CD4-positive, alpha-beta T cell (primary cell): ENCODE measurements at regions of chr22 and their contacts with region 1.

Region 1: GRCh38 chr22:50030297-50031188 is 18.0 kb upstream of the IL17REL start:
- DNase-seq: peak; percentile 69 to 93 (median 78)
- ATAC-seq: peak; percentile 95
- H3K4me3 ChIP-seq: no peak overlapping the region
- H3K4me3 Mint-ChIP-seq: no peak overlapping the region
- H3K27ac ChIP-seq: no peak overlapping the region
- H3K27ac Mint-ChIP-seq: no peak overlapping the region
- H3K4me1 ChIP-seq: peaks cover 23% of the 10 kb centered on the region
- H3K4me1 Mint-ChIP-seq: peaks cover 7% of the 10 kb centered on the region
- H3K27me3 ChIP-seq: peaks cover 9 to 22% of the 10 kb centered on the region in 2 experiments
- H3K27me3 Mint-ChIP-seq: peaks cover 14% of the 10 kb centered on the region
- CTCF ChIP-seq: peak; percentile 86

Region 2: DNA sequence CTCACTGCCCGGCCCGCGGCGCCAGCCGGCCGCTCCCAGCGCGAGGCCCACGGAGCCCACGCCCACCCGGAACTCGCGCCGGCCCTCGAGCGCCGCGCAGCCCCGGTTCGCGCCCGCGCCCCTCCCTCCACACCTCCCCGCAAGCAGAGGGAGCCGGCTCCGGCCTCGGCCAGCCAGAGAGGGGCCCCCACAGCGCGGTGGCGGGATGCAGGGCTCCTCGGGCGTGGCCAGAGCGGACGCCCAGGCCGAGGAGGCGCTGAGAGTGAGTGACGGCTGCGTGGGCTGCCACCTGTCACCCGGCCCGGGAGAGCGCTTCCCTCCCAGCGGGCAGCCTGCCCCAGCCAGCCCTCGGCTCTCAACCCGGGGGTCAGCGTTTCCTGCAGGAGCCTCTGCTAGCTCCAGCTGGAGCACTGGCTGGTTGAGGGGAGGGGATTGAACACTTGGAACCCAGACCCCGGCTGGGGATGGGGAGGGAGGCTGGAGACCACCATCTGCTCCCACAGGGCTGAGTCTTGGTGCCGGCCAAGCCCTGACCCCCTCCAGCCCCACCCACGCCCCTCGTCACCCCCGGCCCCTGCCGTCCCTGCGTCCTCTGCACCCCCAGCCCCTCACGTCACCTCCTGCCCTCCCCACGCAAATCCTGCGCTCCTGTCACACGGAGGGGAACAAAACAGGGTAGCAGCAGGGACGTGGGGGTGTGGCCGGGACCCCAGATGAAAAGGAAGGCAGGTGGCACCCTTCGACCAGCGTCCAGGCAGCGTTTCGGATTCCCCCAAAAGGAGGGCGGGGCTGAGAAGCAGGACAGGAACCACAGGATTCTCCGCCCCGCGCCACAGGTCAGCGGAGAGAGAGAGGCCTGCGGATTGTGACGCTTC is 359.9 kb before region 1 on chr22:
- CTCF ChIA-PET with region 1: no interaction called
- POLR2A ChIA-PET with region 1: no interaction called
- intact Hi-C with region 1: no loop called
- DNase-seq: peak in 5 of 14 experiments; percentile 9 to 49 (median 35)
- ATAC-seq: peak; percentile 43
- H3K4me3 ChIP-seq: peak overlapping the region; percentile 44
- H3K4me3 Mint-ChIP-seq: peak overlapping the region; percentile 84
- H3K27ac ChIP-seq: no peak overlapping the region
- H3K27ac Mint-ChIP-seq: no peak overlapping the region
- H3K4me1 ChIP-seq: peaks cover 37% of the 10 kb centered on the region
- H3K4me1 Mint-ChIP-seq: peaks cover 33% of the 10 kb centered on the region
- H3K27me3 ChIP-seq: peaks cover 17 to 28% of the 10 kb centered on the region in 2 experiments
- H3K27me3 Mint-ChIP-seq: peaks cover 33% of the 10 kb centered on the region
- CTCF ChIP-seq: no peak

Region 3: GRCh38 chr22:49767355-49768062 is 263.0 kb before region 1 on chr22:
- CTCF ChIA-PET with region 1: interaction called, 6 read pairs
- POLR2A ChIA-PET with region 1: interaction called, 7 read pairs
- intact Hi-C with region 1: loop called (anchors 1 kb)
- DNase-seq: peak in 6 of 14 experiments; percentile 14 to 75 (median 54)
- ATAC-seq: peak; percentile 59
- H3K4me3 ChIP-seq: no peak overlapping the region
- H3K4me3 Mint-ChIP-seq: no peak overlapping the region
- H3K27ac ChIP-seq: no peak overlapping the region
- H3K27ac Mint-ChIP-seq: no peak overlapping the region
- H3K4me1 ChIP-seq: peaks cover 13% of the 10 kb centered on the region
- H3K4me1 Mint-ChIP-seq: no peaks in the 10 kb centered on the region
- H3K27me3 ChIP-seq: no peaks in the 10 kb centered on the region
- H3K27me3 Mint-ChIP-seq: no peaks in the 10 kb centered on the region
- CTCF ChIP-seq: peak; percentile 82

Region 4: DNA sequence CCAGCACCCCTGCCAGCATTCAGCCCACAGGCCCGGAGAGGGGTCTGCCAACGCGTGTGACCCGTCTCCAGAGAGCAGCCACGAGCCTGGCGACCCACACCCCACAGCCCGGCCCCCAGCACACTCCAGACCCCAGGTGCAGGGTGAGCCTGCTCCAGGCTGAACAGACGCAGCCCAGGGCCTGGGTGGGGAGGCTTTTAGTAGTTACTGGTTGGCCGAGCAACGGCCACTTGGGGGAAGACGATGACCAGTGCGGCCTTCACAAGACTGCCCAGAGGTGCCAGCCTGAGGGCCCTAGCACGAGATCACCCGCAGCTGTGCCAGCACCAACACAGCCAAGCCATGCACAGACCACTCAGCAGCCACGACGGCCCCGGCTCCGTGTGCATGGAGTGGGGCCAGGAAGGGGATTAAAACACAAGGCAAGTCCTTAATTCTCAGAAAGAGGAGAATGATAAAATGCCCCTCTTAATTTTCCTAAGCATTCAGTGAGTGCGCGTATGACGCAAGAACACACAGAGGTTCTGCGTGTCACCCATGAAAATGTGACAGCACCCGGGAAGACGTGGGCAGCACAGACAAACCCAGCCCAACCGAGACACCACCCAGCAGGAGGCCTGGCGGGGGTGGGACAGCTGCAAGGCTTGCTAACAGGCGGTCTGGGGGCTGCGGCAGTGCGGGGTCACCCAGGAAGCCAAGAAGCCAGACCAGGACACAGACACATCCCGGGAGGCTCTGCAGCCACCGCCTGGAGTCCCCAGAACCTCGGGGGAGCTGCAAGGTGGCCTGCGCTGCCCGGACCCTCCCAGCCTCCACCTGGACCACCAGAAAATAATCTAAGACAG is 250.5 kb before region 1 on chr22:
- CTCF ChIA-PET with region 1: no interaction called
- POLR2A ChIA-PET with region 1: no interaction called
- intact Hi-C with region 1: no loop called
- DNase-seq: no peak
- ATAC-seq: no peak
- H3K4me3 ChIP-seq: no peak overlapping the region
- H3K4me3 Mint-ChIP-seq: no peak overlapping the region
- H3K27ac ChIP-seq: no peak overlapping the region
- H3K27ac Mint-ChIP-seq: no peak overlapping the region
- H3K4me1 ChIP-seq: peaks cover 32% of the 10 kb centered on the region
- H3K4me1 Mint-ChIP-seq: peaks cover 5% of the 10 kb centered on the region
- H3K27me3 ChIP-seq: no peaks in the 10 kb centered on the region
- H3K27me3 Mint-ChIP-seq: no peaks in the 10 kb centered on the region
- CTCF ChIP-seq: no peak

Region 5: GRCh38 chr22:49930739-49931412 is 99.7 kb before region 1 on chr22:
- CTCF ChIA-PET with region 1: interaction called, 36 read pairs
- POLR2A ChIA-PET with region 1: interaction called, 14 read pairs
- intact Hi-C with region 1: loop called (anchors 1 kb)
- DNase-seq: peak in 12 of 14 experiments; percentile 22 to 83 (median 48)
- ATAC-seq: peak; percentile 37
- H3K4me3 ChIP-seq: no peak overlapping the region
- H3K4me3 Mint-ChIP-seq: peak overlapping the region; percentile 73
- H3K27ac ChIP-seq: peak overlapping the region in 1 of 2 donors; percentile 39
- H3K27ac Mint-ChIP-seq: peak overlapping the region; percentile 89
- H3K4me1 ChIP-seq: peaks cover 60% of the 10 kb centered on the region
- H3K4me1 Mint-ChIP-seq: peaks cover 42% of the 10 kb centered on the region
- H3K27me3 ChIP-seq: no peaks in the 10 kb centered on the region
- H3K27me3 Mint-ChIP-seq: no peaks in the 10 kb centered on the region
- CTCF ChIP-seq: peak; percentile 59

Region 6: DNA sequence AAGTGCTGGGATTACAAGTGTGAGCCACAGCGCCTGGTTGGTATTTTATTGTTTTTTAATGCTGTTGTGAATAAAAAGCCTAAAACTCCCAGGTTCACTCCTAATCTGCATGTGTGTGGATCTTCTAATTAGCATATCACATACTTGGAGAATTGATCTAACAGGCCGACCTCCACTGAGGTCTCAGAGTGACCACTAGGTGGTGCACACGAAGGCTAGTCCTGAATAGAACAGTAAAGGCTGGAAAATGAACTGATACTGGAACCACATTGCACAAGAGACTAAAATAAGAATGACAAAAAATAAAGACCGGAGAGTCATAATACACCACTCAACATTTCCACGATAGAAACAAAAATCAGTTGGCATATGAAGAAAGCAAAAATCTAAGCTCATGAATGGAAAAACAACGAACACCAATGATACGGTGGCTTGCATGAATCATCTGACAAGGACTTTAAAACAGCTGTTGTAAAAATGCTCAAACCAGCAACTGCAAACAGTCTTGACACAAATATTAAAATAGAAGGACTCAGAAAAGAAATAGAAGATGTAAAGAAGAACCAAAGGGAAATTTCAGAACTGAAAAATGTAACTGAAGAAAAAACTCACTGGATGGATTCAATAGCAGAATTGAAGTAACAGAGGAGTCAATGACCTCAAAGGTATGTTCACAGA is 50.8 kb before region 1 on chr22:
- CTCF ChIA-PET with region 1: interaction called, 4 read pairs
- POLR2A ChIA-PET with region 1: no interaction called
- intact Hi-C with region 1: loop called in 1 of 2 experiments (anchors 10 kb)
- DNase-seq: peak in 4 of 14 experiments; percentile 33 to 68 (median 54)
- ATAC-seq: no peak
- H3K4me3 ChIP-seq: no peak overlapping the region
- H3K4me3 Mint-ChIP-seq: no peak overlapping the region
- H3K27ac ChIP-seq: no peak overlapping the region
- H3K27ac Mint-ChIP-seq: no peak overlapping the region
- H3K4me1 ChIP-seq: peaks cover 32% of the 10 kb centered on the region
- H3K4me1 Mint-ChIP-seq: peaks cover 29% of the 10 kb centered on the region
- H3K27me3 ChIP-seq: peaks cover 13 to 15% of the 10 kb centered on the region in 2 experiments
- H3K27me3 Mint-ChIP-seq: peaks cover 21% of the 10 kb centered on the region
- CTCF ChIP-seq: peak; percentile 44

Region 7: GRCh38 chr22:50016988-50017700 is 13.4 kb before region 1 on chr22:
- CTCF ChIA-PET with region 1: interaction called, 11 read pairs
- POLR2A ChIA-PET with region 1: no interaction called
- intact Hi-C with region 1: no loop called
- DNase-seq: peak in 8 of 14 experiments; percentile 18 to 74 (median 54)
- ATAC-seq: no peak
- H3K4me3 ChIP-seq: no peak overlapping the region
- H3K4me3 Mint-ChIP-seq: no peak overlapping the region
- H3K27ac ChIP-seq: no peak overlapping the region
- H3K27ac Mint-ChIP-seq: no peak overlapping the region
- H3K4me1 ChIP-seq: peaks cover 66% of the 10 kb centered on the region
- H3K4me1 Mint-ChIP-seq: peaks cover 24% of the 10 kb centered on the region
- H3K27me3 ChIP-seq: peaks cover 10 to 12% of the 10 kb centered on the region in 2 experiments
- H3K27me3 Mint-ChIP-seq: peaks cover 5% of the 10 kb centered on the region
- CTCF ChIP-seq: no peak